GM12878 (cell line): ENCODE measurements at regions of chr3 and their contacts with region 1.

Region 1: DNA sequence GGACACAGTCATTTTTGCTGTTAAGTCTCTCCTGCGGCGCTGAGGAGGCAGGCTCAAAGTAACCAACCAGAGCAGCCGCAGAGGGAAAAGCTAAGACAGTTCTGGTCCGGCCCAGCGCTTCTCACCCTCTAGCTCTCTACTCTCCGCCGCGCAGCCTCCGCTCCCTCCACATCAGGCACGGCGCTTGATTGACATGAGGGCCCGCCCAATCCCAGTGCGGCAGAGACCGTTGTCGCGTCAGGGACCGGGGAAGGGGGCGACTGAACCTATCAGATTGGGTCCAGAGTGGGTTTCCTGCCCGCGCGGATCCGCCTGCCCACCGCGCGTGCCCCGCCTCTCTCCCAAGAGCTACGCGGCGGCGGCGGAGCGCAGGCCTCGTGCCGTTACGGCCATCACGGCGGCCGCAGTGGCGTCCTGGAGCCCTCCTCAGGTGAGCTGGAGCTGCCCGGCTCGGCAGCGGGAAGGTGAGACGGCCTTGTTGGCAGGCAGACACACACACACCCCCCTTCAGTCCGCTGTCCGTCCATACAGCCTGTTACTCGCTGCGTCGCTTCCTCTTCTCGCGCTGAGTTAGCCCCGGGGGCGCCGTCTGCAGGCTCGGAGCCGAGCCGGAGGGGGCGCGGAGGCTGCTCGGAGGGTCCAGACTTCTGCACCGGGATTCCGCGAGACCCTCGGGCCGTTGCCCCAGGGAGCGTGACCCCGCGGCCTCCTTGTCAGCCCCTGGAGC is at the start of gene NCK1:
- DNase-seq: peak; percentile 90
- ATAC-seq: peak; percentile 95
- H3K4me3 ChIP-seq: peak within 1 kb of the TSS; percentile 87
- H3K27ac ChIP-seq: peak within 1 kb of the TSS; percentile 92
- H3K4me1 ChIP-seq: 0 out of 2 replicates have a peak, but pooled peaks cover 2% of the 10 kb centered on the region
- H3K27me3 ChIP-seq: no peaks in the 10 kb centered on the region
- CTCF ChIP-seq: no peak
- EP300 ChIP-seq: peak in 1 of 2 experiments; percentile 13; a peak in 1 of 4 replicates
- POLR2A ChIP-seq: peak; percentile 98
- RAD21 ChIP-seq: no peak
- polyA plus RNA-seq, gene NCK1: 18.5 to 20.4 TPM

Region 2: GRCh38 chr3:136390574-136390973 is 471.5 kb before region 1 on chr3:
- CTCF ChIA-PET with region 1: interaction called, 19 read pairs
- POLR2A ChIA-PET with region 1: no interaction called
- RAD21 ChIA-PET with region 1: no interaction called
- SMC1A ChIA-PET with region 1: interaction called, 5 read pairs
- in situ Hi-C with region 1: no loop called
- intact Hi-C with region 1: no loop called
- DNase-seq: no peak
- ATAC-seq: no peak
- H3K4me3 ChIP-seq: no peak overlapping the region
- H3K27ac ChIP-seq: no peak overlapping the region
- H3K4me1 ChIP-seq: peaks cover 5% of the 10 kb centered on the region; the same call in 1 of the 2 replicates
- H3K27me3 ChIP-seq: no peaks in the 10 kb centered on the region
- CTCF ChIP-seq: no peak
- EP300 ChIP-seq: no peak
- POLR2A ChIP-seq: no peak
- RAD21 ChIP-seq: no peak

Region 3: DNA sequence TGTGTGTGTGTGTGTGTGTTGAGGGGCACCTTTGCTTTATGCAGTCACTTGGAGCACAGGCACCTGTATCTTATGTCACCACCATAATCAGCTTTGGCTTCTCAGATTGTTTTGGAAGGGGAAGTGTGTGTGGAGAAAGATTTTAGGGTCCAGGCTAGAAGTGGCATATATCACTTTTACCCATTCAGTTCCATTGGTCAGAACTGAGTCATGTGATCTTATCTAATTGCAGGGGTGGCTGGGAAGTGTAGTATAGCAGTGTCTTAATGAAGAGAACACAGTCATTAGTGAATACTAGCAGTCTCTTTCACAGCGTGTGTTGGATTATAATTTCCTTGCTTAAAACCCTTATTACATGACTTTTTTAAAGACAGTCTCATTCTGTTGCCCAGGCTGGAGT is 20.5 kb after region 1 on chr3:
- CTCF ChIA-PET with region 1: interaction called, 4 read pairs
- POLR2A ChIA-PET with region 1: interaction called, 7 read pairs
- RAD21 ChIA-PET with region 1: interaction called, 9 read pairs
- SMC1A ChIA-PET with region 1: interaction called, 18 read pairs
- in situ Hi-C with region 1: no loop called
- intact Hi-C with region 1: no loop called
- DNase-seq: no peak
- ATAC-seq: peak; percentile 69
- H3K4me3 ChIP-seq: no peak overlapping the region
- H3K27ac ChIP-seq: no peak overlapping the region
- H3K4me1 ChIP-seq: peaks cover 16% of the 10 kb centered on the region
- H3K27me3 ChIP-seq: no peaks in the 10 kb centered on the region
- CTCF ChIP-seq: no peak
- EP300 ChIP-seq: no peak
- POLR2A ChIP-seq: no peak
- RAD21 ChIP-seq: no peak

Region 4: GRCh38 chr3:136919799-136920580 is 57.9 kb after region 1 on chr3:
- CTCF ChIA-PET with region 1: interaction called, 7 read pairs
- POLR2A ChIA-PET with region 1: interaction called, 5 read pairs
- RAD21 ChIA-PET with region 1: interaction called, 13 read pairs
- SMC1A ChIA-PET with region 1: interaction called, 12 read pairs
- in situ Hi-C with region 1: no loop called
- intact Hi-C with region 1: loop called (anchors 5 kb)
- DNase-seq: no peak
- ATAC-seq: peak; percentile 95
- H3K4me3 ChIP-seq: no peak overlapping the region
- H3K27ac ChIP-seq: peak overlapping the region; percentile 41
- H3K4me1 ChIP-seq: peaks cover 2% of the 10 kb centered on the region; the same call in 1 of the 2 replicates
- H3K27me3 ChIP-seq: no peaks in the 10 kb centered on the region
- CTCF ChIP-seq: no peak
- EP300 ChIP-seq: peak in 1 of 2 experiments; percentile 42; a peak in 1 of 4 replicates
- POLR2A ChIP-seq: no peak
- RAD21 ChIP-seq: no peak

Region 5: DNA sequence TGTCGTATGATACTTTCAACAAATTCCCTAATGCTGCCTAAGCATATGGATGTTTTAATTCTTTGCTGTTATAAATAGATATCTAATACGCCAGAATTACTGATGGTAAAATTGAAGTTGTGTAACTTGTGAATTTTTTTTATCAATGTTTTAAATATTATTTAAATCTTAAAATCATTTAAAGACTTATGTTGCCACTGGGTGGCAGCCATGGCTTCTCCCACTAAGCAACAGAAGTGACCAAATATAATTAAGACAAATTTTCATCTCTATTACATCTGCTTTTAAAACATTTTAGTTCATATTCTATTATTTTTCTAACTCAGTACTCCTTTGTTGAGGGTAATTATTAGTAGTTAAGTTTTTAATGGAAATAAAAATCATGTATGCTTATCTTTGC is 87.7 kb after region 1 on chr3:
- CTCF ChIA-PET with region 1: interaction called, 10 read pairs
- POLR2A ChIA-PET with region 1: no interaction called
- RAD21 ChIA-PET with region 1: interaction called, 6 read pairs
- SMC1A ChIA-PET with region 1: interaction called, 9 read pairs
- in situ Hi-C with region 1: no loop called
- intact Hi-C with region 1: loop called (anchors 5 kb)
- DNase-seq: no peak
- ATAC-seq: no peak
- H3K4me3 ChIP-seq: no peak overlapping the region
- H3K27ac ChIP-seq: no peak overlapping the region
- H3K4me1 ChIP-seq: peaks cover 15% of the 10 kb centered on the region
- H3K27me3 ChIP-seq: no peaks in the 10 kb centered on the region
- CTCF ChIP-seq: peak in 2 of 3 experiments; percentile 4 to 7; a peak in 1 of 6 replicates
- EP300 ChIP-seq: no peak
- POLR2A ChIP-seq: no peak
- RAD21 ChIP-seq: 0 out of 2 replicates have a peak, but pooled peaks have one; percentile 19